Ascending aorta (tissue), 2 donors: ENCODE measurements at regions of chr15 and their contacts with region 1.

Region 1: DNA sequence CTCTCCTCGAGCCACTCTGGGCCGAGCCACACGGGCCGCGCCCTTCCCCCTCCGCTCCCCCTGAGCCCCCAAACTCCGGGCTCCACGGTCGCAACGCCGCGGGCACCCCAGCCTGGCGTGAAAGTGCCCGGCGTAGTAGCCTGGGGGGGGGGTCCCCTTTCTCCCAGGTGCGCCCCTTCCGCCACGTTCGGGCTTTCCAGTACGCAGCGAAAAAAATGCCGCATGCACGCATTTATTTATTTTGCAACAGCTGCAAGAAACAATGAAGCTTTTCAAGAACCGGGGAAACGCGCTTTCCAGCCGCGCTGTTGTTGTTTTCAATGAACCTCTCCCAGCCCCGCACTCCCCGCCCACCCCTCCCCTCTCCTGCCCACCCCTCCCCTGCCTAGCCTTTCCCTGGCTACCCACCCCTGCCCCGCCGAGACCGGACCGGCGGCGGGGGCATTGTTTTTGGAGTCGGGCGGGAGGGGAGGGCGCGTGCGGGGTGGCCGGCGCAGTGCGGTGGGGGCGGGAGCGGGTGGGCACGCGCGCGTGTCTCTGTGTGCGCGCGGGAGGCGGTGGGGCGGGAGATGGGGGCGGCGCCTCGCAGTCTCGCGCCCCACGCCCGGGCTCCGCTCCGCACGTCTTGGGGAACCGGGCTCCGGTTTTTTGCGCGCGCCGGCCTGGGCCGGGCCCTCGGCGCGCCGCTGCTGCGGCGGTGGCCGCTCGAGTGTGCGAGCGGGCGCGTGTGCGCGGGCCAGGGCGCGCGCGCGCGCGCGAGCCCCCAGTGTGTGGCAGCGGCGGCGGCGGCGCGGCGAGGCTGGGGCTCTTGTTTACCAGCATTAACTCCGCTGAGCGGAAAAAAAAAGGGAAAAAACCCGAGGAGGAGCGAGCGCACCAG is at the start of gene IGF1R:
- DNase-seq: peak; percentile 46 to 93
- H3K4me3 ChIP-seq: peak within 1 kb of the TSS; percentile 94 to 100
- H3K27ac ChIP-seq: peak within 1 kb of the TSS; percentile 93 to 98
- H3K4me1 ChIP-seq: no peaks in the 10 kb centered on the region
- H3K27me3 ChIP-seq: no peaks in the 10 kb centered on the region
- CTCF ChIP-seq: peak in 2 of 3 experiments; percentile 10 to 33
- total RNA-seq, gene IGF1R: 151 TPM

Region 2: GRCh38 chr15:98518823-98519561 is 129.0 kb before region 1 on chr15:
- intact Hi-C with region 1: loop called (anchors 1 kb)
- DNase-seq: no peak
- H3K4me3 ChIP-seq: no peak overlapping the region
- H3K27ac ChIP-seq: no peak overlapping the region
- H3K4me1 ChIP-seq: peaks cover 0 to 2% of the 10 kb centered on the region in 2 donors
- H3K27me3 ChIP-seq: no peaks in the 10 kb centered on the region
- CTCF ChIP-seq: peak; percentile 71 to 92 (median 78)

Region 3: DNA sequence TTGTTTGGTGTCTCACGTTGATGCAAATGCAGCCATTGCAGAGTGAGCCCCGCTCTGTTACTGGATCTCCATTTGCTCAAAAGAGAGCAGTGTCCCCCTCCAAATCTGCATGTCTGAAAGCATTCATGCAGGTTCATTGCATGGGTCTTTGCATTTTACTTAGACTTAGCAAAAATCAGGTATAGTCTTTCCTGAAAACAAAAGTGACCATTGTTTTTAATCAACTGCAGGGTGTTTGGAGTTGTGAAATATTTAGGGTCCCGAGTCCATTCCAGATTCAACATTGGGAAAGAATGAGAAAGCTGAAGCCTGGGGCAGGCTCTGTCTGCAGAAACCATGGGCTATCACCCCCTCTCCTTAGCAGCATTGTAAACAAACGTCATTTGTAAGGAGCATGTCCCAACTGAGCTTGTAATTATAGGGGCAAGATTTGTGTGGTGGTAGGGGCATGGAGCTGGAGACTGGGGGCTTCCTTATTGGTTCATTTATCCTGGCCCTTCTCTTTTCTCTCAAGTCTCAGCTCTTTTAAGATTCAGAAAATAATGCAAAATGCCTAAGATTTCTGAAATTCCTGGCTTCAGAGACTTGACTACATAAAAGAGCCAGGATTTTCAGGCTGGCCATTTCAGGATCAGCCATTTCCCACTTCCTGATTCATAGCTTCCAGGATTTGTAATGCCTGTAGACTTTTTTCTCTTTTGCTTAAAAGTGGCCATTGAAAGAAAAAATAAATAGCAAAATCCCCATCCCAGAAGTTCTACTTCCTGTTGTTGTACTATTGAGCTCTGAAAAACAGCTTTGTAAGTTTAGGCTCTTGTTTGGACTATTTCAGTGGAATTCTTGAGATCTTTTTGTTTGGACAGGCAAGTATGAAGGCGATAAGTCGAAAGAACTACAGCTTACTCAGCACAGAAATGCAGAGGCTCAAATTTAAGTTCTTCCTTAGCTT is 23.3 kb after region 1 on chr15:
- intact Hi-C with region 1: loop called (anchors 2 kb)
- DNase-seq: no peak
- H3K4me3 ChIP-seq: peak overlapping the region in 1 of 2 donors; percentile 40
- H3K27ac ChIP-seq: peak overlapping the region; percentile 83 to 84
- H3K4me1 ChIP-seq: peaks cover 24 to 70% of the 10 kb centered on the region in 2 donors
- H3K27me3 ChIP-seq: no peaks in the 10 kb centered on the region
- CTCF ChIP-seq: no peak

Region 4: GRCh38 chr15:98760112-98760826 is 112.3 kb after region 1 on chr15:
- intact Hi-C with region 1: loop called (anchors 5 kb)
- DNase-seq: no peak
- H3K4me3 ChIP-seq: no peak overlapping the region
- H3K27ac ChIP-seq: peak overlapping the region; percentile 15 to 53
- H3K4me1 ChIP-seq: peaks cover 4 to 25% of the 10 kb centered on the region in 2 donors
- H3K27me3 ChIP-seq: no peaks in the 10 kb centered on the region
- CTCF ChIP-seq: no peak

Region 5: GRCh38 chr15:98954411-98954810 is 306.4 kb after region 1 on chr15:
- intact Hi-C with region 1: loop called (anchors 2 kb)
- DNase-seq: peak; percentile 84 to 97
- H3K4me3 ChIP-seq: no peak overlapping the region
- H3K27ac ChIP-seq: peak overlapping the region; percentile 95 to 98
- H3K4me1 ChIP-seq: peaks cover 20 to 48% of the 10 kb centered on the region in 2 donors
- H3K27me3 ChIP-seq: no peaks in the 10 kb centered on the region
- CTCF ChIP-seq: no peak

Region 6: DNA sequence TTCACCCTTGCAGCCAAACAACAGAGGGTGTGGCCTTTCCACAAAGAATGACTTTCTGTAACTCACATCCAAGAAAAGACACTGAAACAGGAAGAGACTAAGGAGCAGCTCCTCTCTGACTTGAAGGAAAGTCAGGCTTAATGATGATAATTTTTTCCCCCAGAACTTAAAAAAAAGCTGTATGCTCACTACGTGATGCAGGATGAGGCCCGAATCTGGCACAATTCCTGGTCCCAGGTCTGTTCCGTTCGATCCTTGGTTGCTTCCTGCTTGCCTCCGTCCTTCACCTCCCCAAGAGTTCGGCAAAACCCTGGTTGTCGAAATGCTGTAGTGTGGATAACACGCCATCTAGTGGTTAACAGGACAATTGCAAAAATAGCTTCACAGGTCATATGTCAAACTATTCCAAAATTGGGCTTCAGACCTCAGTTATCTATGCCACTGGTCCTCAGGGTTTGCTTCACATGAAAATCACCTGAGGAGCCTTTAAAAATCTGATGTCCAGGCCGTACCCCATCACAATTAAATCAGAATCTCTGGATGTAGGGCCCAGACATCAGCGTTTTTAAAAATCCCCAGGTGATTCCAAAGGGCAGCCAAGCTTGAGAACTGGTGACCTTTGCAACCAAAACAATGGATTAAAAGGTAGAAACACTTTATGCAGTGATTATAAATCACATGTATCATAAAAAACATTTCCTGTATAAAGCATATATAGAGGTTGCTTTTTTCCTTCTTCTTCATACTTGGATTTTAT is 428.7 kb after region 1 on chr15:
- intact Hi-C with region 1: loop called (anchors 2 kb)
- DNase-seq: peak in 1 of 2 donors; percentile 79
- H3K4me3 ChIP-seq: peak overlapping the region; percentile 20 to 56
- H3K27ac ChIP-seq: no peak overlapping the region
- H3K4me1 ChIP-seq: no peaks in the 10 kb centered on the region
- H3K27me3 ChIP-seq: no peaks in the 10 kb centered on the region
- CTCF ChIP-seq: peak; percentile 73 to 92 (median 79)